A673 (cell line): ENCODE measurements at regions of chr1 and their contacts with region 1.

Region 1: GRCh38 chr1:173867753-173868265 is at the start of gene GAS5:
- DNase-seq: peak; percentile 100
- H3K4me3 ChIP-seq: peak within 1 kb of the TSS; percentile 76
- H3K27ac ChIP-seq: peak within 1 kb of the TSS; percentile 89
- H3K4me1 ChIP-seq: peaks cover 30% of the 10 kb centered on the region
- H3K27me3 ChIP-seq: no peaks in the 10 kb centered on the region
- CTCF ChIP-seq: no peak
- total RNA-seq, gene GAS5: 479 and 503 TPM in 2 replicates

Region 2: DNA sequence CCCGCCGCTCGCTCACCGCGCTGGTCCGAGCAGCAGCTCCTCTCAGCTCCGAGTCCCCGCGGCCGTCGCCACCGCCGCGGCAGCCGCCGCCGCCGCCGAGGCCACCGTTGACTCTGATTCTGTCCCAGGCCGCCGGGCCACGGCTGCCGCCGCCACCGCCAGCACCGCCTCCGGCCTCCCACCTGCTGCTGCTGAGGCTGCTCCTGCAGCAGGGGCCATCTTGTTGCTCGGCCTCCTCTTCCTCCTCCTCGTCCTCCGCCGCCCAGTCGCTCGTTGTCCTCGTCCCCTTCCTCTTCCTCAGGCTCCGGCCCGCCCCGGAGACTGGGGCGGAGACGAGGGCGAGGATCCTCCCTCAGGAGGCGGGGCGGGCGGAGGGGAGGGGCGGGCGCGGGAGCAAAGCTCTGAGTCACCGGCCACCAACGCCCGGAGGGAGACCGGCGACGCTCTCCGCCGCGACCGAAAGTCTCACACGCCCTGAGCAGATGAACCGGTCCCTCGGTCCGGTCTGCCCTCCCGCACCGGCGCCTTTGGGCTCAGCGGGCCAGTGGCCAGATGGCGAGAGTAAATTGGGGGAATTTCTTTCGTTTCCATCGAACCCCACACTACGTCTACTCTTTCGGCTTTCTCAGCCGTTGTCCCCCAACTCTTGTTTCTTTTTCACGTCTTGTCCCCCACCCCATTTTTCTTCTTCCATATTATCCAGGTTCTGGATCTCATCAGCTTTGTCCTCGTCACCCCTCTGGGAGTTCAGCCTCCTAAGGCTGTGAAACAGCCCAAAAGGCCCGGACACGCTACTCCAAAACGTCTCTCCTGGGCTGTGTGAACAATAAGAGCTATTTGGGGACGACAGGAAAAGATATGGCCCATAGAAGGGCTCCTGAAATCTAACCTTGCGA is 154.5 kb after region 1 on chr1 and contains the start of gene RC3H1:
- CTCF ChIA-PET with region 1: no interaction called
- POLR2A ChIA-PET with region 1: no interaction called
- intact Hi-C with region 1: loop called (anchors 5 kb)
- DNase-seq: peak; percentile 92
- H3K4me3 ChIP-seq: peak within 1 kb of the TSS; percentile 92
- H3K27ac ChIP-seq: peak within 1 kb of the TSS; percentile 88
- H3K4me1 ChIP-seq: peaks cover 41% of the 10 kb centered on the region
- H3K27me3 ChIP-seq: no peaks in the 10 kb centered on the region
- CTCF ChIP-seq: no peak
- total RNA-seq, gene RC3H1: 27.2 and 28.0 TPM in 2 replicates